ENCODE measurements at regions of chr20 and their contacts with region 1.

Region 1: DNA sequence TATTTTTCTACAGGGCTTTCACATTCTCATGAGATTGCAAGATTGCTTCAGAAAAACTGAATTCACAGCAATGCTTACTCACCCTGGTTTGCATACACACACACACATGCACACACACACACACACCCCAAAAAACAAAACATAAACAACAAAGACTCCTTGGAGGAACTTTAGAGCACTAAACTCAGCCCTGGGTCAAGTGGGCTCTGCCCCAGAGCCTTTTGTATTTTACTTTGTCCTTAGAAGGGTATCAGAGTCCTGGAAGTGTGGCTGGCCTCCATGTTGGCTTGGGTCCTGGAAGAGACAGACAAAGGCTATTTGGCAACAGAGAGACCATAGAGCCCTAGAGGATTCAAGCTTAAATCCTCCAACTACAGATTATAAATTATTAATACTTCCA is 8.0 kb upstream of the CST9 start:
- DNase-seq: no peak
- ATAC-seq: no peak
- H3K4me3 ChIP-seq: no peak overlapping the region
- H3K27ac ChIP-seq: no peak overlapping the region
- H3K4me1 ChIP-seq: no peaks in the 10 kb centered on the region
- H3K27me3 ChIP-seq: no peaks in the 10 kb centered on the region
- CTCF ChIP-seq: no peak

Region 2: DNA sequence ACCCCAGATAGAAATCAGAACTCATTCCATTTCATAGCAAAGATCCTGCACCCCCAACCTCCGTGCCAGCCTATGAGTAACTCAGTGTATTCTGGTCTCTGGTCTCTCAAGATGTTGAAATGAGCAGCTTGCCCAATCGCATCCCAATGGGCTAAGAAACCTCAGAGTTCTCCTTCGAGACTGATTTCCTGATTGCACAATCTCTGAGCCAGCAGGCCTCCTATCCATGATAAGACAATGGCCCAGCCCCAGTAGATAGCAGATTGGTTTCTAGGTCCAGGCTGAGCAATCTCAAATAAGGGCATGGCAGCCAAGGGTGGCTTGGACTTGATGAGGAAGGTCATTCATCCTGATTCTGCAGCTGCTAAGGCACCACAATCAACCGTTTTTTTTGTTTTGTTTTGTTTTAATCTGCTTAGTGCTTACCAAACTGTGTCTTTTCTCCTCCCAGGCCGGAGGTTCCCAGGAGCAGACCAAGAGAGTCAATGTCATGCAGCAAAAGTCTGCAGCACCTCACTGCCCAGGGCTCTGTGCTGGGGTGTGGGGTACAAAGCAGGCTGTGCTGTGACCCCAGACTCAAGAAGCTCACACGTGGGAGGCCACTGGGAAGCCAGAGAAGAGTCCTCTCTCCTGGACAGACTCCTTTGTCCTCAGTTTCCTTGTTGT is 388.1 kb before region 1 on chr20:
- CTCF ChIA-PET with region 1: no interaction called
- POLR2A ChIA-PET with region 1: no interaction called
- in situ Hi-C with region 1: no loop called
- intact Hi-C with region 1: no loop called
- DNase-seq: no peak
- ATAC-seq: no peak
- H3K4me3 ChIP-seq: no peak overlapping the region
- H3K27ac ChIP-seq: no peak overlapping the region
- H3K4me1 ChIP-seq: no peaks in the 10 kb centered on the region
- H3K27me3 ChIP-seq: no peaks in the 10 kb centered on the region
- CTCF ChIP-seq: no peak

Region 3: GRCh38 chr20:23679133-23680092 is 65.7 kb after region 1 on chr20:
- CTCF ChIA-PET with region 1: no interaction called
- POLR2A ChIA-PET with region 1: no interaction called
- in situ Hi-C with region 1: no loop called
- intact Hi-C with region 1: loop called (anchors 10 kb)
- DNase-seq: no peak
- ATAC-seq: no peak
- H3K4me3 ChIP-seq: no peak overlapping the region
- H3K27ac ChIP-seq: no peak overlapping the region
- H3K4me1 ChIP-seq: no peaks in the 10 kb centered on the region
- H3K27me3 ChIP-seq: no peaks in the 10 kb centered on the region
- CTCF ChIP-seq: no peak

Region 4: GRCh38 chr20:23727016-23727415 is 113.3 kb after region 1 on chr20:
- CTCF ChIA-PET with region 1: no interaction called
- POLR2A ChIA-PET with region 1: no interaction called
- in situ Hi-C with region 1: no loop called
- intact Hi-C with region 1: no loop called
- DNase-seq: no peak
- ATAC-seq: no peak
- H3K4me3 ChIP-seq: no peak overlapping the region
- H3K27ac ChIP-seq: no peak overlapping the region
- H3K4me1 ChIP-seq: no peaks in the 10 kb centered on the region
- H3K27me3 ChIP-seq: no peaks in the 10 kb centered on the region
- CTCF ChIP-seq: no peak

Measured in Panc1 (cell line).